ENCODE measurements at regions of chr15 and their contacts with region 1.

Region 1: DNA sequence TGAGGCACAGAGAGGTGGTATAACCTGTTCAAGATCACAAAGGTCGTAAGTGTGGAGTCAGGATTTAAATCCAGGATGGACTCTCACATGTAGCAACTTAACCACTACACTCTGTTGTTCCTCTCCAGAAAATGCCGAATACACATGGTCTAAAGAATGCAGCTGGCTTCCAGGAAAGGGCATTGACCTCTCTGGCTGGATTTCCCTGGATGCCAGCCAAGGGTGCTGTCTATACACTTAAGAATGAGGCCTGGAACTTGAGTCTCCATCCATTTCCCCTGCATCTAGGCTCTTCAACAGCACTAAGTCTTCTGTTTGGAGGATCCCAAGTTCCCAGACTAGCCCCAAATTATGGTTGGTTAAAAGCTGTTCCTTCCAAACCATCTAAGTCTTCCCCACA is 60.5 kb downstream of the CERS3 start:
- DNase-seq: peak in 1 of 2 donors; percentile 39
- ATAC-seq: peak in 4 of 8 donors; percentile 18 to 74 (median 60)
- H3K4me3 ChIP-seq: no peak overlapping the region
- H3K27ac ChIP-seq: no peak overlapping the region
- H3K4me1 ChIP-seq: peaks cover 0 to 10% (median 0%) of the 10 kb centered on the region in 9 donors
- H3K27me3 ChIP-seq: no peaks in the 10 kb centered on the region
- CTCF ChIP-seq: no peak

Region 2: DNA sequence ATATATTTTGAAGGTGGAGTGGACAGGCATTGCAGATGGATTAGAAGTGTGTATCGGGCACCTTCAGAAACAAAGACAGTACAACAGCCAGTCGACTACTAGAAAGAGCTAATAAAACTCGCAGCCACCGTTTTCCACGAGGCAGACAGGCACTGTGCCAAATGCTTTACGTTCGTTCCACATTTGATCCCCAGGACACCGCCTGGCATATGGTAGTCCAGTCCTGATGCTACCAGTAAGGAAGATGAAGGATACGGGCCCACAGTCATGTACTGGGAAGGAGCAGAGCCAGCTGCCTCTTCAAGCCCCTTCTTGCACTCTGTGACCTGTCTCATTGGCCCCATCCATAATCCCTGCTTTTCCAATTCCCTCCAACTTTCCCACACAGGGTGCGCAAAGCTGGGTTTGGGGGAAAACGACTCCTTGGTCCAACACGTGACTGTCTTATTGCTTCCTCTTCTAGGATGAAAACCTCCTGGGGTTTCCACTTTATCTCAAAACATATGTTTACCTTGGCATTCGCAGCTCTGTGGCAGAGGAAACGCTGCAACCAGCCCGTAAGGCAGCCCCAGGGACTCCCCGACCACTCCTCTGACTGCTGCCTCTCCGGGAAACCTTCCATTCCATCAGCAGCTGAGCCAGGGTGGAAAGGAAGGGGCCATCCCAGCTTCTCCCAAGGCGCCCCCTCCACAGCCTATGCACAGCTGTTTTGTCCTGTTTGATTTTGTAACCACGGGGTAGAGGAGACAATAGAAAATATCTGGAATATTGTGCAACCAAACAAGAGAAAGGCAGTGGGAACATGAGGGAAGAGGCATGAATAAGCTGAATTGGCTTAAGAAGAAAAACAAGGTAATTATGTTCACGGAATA is 233.9 kb before region 1 on chr15:
- intact Hi-C with region 1: loop called in 1 of 10 experiments (anchors 10 kb)
- DNase-seq: peak; percentile 49 to 63
- ATAC-seq: peak; percentile 68 to 87 (median 81)
- H3K4me3 ChIP-seq: no peak overlapping the region
- H3K27ac ChIP-seq: peak overlapping the region in 5 of 10 donors; percentile 7 to 62 (median 29)
- H3K4me1 ChIP-seq: peaks cover 0 to 19% (median 15%) of the 10 kb centered on the region in 9 donors
- H3K27me3 ChIP-seq: peaks cover 0 to 5% (median 0%) of the 10 kb centered on the region in 7 donors
- CTCF ChIP-seq: no peak

Region 3: GRCh38 chr15:100537331-100537730 is 69.0 kb after region 1 on chr15:
- intact Hi-C with region 1: loop called in 1 of 10 experiments (anchors 10 kb)
- DNase-seq: no peak
- ATAC-seq: no peak
- H3K4me3 ChIP-seq: no peak overlapping the region
- H3K27ac ChIP-seq: peak overlapping the region in 1 of 10 donors; percentile 46
- H3K4me1 ChIP-seq: peaks cover 0 to 10% (median 0%) of the 10 kb centered on the region in 9 donors
- H3K27me3 ChIP-seq: peaks cover 0 to 27% (median 5%) of the 10 kb centered on the region in 7 donors
- CTCF ChIP-seq: no peak